Activated T-helper 1 cell treated with anti-CD3 and anti-CD28 coated beads, Interleukin-12 subunit alpha, Interleukin-12 subunit beta, Interleukin-2, Interleukin-4 antibody, amounts not matched to agents 30 ng/mL and 10 ng/mL and 1 ng/mL, durations not matched to agents 14 hours and 24 hours and 36 hours (primary cell): ENCODE measurements at regions of chr11 and their contacts with region 1.

Region 1: GRCh38 chr11:61792310-61793085 is at the starts of genes FEN1 and TMEM258:
- DNase-seq: peak; percentile 86
- H3K4me3 Mint-ChIP-seq: peak within 1 kb of the TSS; percentile 96
- H3K27ac Mint-ChIP-seq: peak within 1 kb of the TSS; percentile 99
- H3K4me1 Mint-ChIP-seq: peaks cover 58% of the 10 kb centered on the region
- H3K27me3 Mint-ChIP-seq: no peaks in the 10 kb centered on the region
- total RNA-seq, gene FEN1: 147 and 149 TPM in 2 replicates
- total RNA-seq, gene TMEM258: 164 and 166 TPM in 2 replicates

Region 2: GRCh38 chr11:61695917-61696316 is 96.6 kb before region 1 on chr11:
- intact Hi-C with region 1: loop called (anchors 1 kb)
- DNase-seq: peak; percentile 90
- H3K4me3 Mint-ChIP-seq: peak overlapping the region; percentile 70
- H3K27ac Mint-ChIP-seq: peak overlapping the region; percentile 82
- H3K4me1 Mint-ChIP-seq: peaks cover 25% of the 10 kb centered on the region
- H3K27me3 Mint-ChIP-seq: peaks cover 3% of the 10 kb centered on the region

Region 3: DNA sequence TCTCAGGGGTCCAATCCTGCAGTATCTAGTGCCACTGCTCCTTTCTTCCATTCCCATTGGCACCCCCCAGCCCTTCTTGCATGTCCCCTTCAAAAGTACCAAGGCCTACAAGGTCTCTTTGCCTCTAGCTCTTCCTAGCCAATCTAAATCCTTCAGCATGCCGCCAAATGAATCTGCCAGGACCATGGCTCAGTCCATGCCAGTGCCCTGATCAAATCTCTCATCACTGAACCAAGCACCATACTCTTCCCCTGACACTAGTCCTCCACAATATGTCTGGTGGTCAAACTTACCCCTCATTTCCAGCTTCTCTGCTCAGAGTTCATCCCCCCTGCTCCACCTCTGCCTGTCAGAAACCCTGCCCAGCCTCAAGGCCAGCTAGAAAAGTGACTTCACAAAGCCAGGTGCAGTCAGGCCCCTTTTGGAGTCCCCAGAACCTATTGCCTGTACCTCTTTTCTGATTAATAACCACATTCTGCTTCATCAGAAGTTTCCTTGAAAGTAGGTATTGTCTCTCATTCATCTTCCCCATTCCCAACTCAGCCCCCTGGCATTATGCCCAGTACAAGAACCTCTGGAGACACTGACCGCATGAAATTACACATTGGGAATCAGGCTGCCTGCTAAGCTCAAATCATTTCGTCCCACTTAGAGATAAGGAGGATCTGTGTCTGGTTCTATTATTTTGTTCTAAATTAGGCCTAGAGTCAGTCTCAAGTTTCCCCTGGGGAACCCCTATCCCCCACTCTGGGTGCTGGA is 11.6 kb after region 1 on chr11:
- intact Hi-C with region 1: no loop called
- DNase-seq: no peak
- H3K4me3 Mint-ChIP-seq: no peak overlapping the region
- H3K27ac Mint-ChIP-seq: no peak overlapping the region
- H3K4me1 Mint-ChIP-seq: peaks cover 5% of the 10 kb centered on the region
- H3K27me3 Mint-ChIP-seq: no peaks in the 10 kb centered on the region

Region 4: DNA sequence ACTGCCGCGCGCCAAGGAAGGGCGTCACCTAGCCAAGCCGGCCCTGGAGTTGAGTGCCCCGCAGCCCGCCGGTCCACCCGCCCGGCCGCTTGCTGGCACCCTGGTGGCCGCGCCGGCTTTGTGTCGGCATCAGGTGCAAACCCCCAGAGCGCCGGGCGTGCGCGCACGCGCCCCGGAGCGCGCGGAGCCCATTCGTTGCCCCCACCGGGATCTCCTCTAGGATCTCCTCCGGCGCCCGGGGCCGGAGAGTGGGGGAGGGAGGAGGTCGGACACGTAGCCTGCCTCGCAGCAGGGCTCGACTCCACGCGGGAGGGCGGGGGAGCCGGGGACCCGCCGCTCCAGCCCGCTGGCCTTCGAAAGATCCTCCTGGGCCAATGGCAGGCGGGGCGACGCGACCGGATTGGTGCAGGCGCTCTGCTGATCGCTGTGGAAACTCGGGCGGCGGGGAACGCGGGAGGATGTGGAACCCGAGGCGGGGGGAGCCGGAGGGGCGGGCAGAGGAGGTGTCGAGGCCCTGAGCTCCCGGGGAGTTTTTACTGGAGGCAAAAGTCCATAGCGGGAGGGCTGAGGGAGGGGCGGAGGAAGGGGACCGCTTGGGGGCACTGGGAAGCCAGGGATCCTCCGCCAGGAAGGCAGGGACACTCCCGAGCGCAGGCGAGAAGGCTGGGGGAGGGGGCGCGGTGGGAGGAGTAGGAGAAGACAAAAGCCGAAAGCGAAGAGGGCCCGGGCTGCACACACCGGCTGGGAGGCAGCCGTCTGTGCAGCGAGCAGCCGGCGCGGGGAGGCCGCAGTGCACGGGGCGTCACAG is 35.3 kb after region 1 on chr11 and contains the start of gene FADS2:
- intact Hi-C with region 1: loop called (anchors 1 kb)
- DNase-seq: peak; percentile 91
- H3K4me3 Mint-ChIP-seq: peak within 1 kb of the TSS; percentile 93
- H3K27ac Mint-ChIP-seq: peak within 1 kb of the TSS; percentile 96
- H3K4me1 Mint-ChIP-seq: peaks cover 50% of the 10 kb centered on the region
- H3K27me3 Mint-ChIP-seq: no peaks in the 10 kb centered on the region
- total RNA-seq, gene FADS2: 250 and 256 TPM in 2 replicates

Region 5: GRCh38 chr11:61891331-61892084 is 99.0 kb after region 1 on chr11 and contains the start of gene FADS3:
- intact Hi-C with region 1: loop called (anchors 2 kb)
- DNase-seq: peak; percentile 64
- H3K4me3 Mint-ChIP-seq: peak within 1 kb of the TSS; percentile 88
- H3K27ac Mint-ChIP-seq: peak within 1 kb of the TSS; percentile 29
- H3K4me1 Mint-ChIP-seq: peaks cover 3% of the 10 kb centered on the region
- H3K27me3 Mint-ChIP-seq: peaks cover 6% of the 10 kb centered on the region
- total RNA-seq, gene FADS3: 9.0 and 14.2 TPM in 2 replicates

Region 6: GRCh38 chr11:61967116-61967923 is 174.8 kb after region 1 on chr11 and contains the start of gene FTH1:
- intact Hi-C with region 1: loop called (anchors 5 kb)
- DNase-seq: peak; percentile 86
- H3K4me3 Mint-ChIP-seq: peak within 1 kb of the TSS; percentile 89
- H3K27ac Mint-ChIP-seq: peak within 1 kb of the TSS; percentile 89
- H3K4me1 Mint-ChIP-seq: peaks cover 62% of the 10 kb centered on the region
- H3K27me3 Mint-ChIP-seq: no peaks in the 10 kb centered on the region
- total RNA-seq, gene FTH1: 566 and 580 TPM in 2 replicates

Region 7: GRCh38 chr11:62123669-62124185 is 331.2 kb after region 1 on chr11 and contains the start of gene INCENP:
- intact Hi-C with region 1: loop called (anchors 1 kb)
- DNase-seq: peak; percentile 94
- H3K4me3 Mint-ChIP-seq: peak within 1 kb of the TSS; percentile 94
- H3K27ac Mint-ChIP-seq: peak within 1 kb of the TSS; percentile 73
- H3K4me1 Mint-ChIP-seq: peaks cover 33% of the 10 kb centered on the region
- H3K27me3 Mint-ChIP-seq: peaks cover 11% of the 10 kb centered on the region
- total RNA-seq, gene INCENP: 94.3 and 98.1 TPM in 2 replicates